Sigmoid colon (tissue), 7 donors: ENCODE measurements at regions of chr7 and their contacts with region 1.

Region 1: GRCh38 chr7:150420987-150421674 is 29.3 kb upstream of the GIMAP8 start:
- DNase-seq: peak; percentile 90
- H3K4me3 ChIP-seq: no peak overlapping the region
- H3K27ac ChIP-seq: no peak overlapping the region
- H3K4me1 ChIP-seq: peaks cover 0 to 7% (median 2%) of the 10 kb centered on the region in 4 donors
- H3K27me3 ChIP-seq: no peaks in the 10 kb centered on the region
- CTCF ChIP-seq: peak; percentile 52 to 85 (median 81)
- EP300 ChIP-seq: no peak
- POLR2A ChIP-seq: no peak

Region 2: DNA sequence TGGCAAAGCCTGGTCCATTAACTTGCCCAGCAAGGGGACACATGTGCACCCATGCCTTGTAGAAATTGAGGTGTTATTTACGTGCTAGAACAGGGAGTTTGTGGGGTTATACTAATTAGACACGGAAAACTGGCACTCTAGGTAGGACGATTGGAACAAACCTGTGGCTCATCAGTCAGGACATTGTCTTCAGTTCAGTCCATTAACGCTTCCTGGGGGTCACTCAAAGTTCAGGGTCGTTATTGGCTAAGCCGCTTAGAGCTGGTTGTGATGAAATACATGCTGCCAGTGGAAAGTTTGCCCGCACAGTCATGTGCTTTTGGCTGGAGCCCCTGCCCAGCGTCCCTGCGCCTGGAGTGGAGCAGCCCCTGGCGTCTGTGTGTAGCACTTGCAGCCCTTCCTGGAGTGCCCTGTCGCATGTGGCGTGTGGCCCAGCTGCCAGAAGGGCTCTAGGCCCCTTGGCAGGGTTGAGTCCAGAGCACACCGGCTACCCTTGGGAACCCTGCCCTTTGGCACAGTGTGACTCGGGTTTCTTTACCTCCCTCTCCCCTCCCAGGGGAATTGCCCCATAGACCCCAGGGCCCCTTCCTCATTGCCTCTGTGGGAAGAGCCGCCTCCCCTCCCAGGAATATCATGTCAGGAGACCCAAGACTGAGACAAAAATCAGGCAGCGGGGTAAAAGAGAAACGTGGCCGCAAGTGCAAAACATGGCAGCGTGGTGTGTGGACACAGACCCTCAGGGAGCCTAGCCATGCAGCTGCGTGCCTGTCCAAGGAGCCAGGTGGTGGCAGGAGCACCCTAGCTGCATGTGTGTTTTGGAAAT is 32.2 kb before region 1 on chr7:
- intact Hi-C with region 1: loop called (anchors 2 kb)
- DNase-seq: peak; percentile 95
- H3K4me3 ChIP-seq: no peak overlapping the region
- H3K27ac ChIP-seq: peak overlapping the region; percentile 60 to 76 (median 67)
- H3K4me1 ChIP-seq: peaks cover 0 to 17% (median 16%) of the 10 kb centered on the region in 4 donors
- H3K27me3 ChIP-seq: no peaks in the 10 kb centered on the region
- CTCF ChIP-seq: peak; percentile 88 to 93 (median 92)
- EP300 ChIP-seq: peak in 2 of 4 donors; percentile 43 to 72
- POLR2A ChIP-seq: no peak